Heart right ventricle (tissue), 16 donors: ENCODE measurements at regions of chr5 and their contacts with region 1.

Region 1: DNA sequence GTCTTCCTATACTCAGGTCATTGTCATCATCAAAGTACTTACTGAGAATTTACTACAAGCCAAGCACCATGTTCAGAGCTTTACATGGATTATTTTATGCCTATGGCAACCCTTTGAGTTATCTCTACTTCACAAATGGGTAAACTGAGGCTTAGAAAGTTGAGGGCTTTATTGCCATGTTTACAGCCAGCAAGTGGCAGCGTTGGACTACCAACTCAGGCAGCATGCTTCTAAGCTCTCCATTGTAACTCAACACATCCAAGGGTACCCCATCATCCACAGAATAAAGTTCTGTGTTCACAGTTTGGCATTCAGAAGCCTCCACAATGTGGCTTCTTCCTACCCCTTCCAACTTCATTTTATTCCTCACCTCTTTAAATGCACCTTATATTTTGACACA is 422.6 kb upstream of the GRIA1 start:
- DNase-seq: no peak
- ATAC-seq: no peak
- H3K4me3 ChIP-seq: no peak overlapping the region
- H3K27ac ChIP-seq: no peak overlapping the region
- H3K4me1 ChIP-seq: no peaks in the 10 kb centered on the region
- H3K27me3 ChIP-seq: no peaks in the 10 kb centered on the region
- CTCF ChIP-seq: no peak

Region 2: DNA sequence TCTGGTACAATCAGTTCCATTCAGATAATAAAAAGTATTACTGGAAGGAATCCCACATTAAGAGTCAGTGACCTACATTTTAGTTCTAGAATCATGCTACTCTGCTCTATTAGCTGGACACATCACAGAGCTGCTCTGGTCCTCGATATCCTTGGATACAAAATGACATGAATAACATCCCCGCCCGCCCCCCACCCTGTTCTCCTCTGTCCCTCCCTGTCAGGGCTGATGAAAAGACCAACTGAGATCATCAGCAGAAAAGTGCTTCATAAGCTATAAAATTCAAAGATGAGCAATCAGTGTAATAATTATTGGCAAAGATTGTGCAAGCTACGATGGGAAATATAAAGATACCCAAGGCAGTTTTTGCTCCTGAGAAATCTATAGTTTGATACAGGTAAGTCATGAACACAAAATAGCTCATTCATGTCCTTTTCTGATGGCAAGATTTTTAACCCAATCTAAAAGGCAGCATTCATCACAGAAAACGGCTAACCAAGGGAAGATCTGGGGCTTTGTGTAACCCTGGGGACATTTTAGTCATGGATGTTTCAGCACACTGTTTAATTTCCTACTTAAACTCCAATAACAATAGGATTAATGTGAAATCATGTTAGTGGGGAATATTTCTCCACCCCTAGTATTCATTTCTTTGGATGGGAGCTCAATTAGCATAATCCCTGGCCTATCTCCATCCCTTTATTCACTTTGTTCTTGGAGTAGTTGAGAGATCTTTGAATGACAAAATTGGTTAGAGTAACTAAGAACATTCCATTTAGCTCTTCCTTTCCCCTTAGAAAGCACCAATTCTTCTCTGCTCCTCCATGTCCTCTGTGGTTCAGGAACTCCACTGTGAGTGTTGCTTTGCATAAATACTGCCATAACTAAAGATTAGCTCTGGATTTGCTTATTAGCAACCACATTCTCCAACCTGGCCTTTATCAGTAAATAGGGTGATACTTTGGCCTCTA is 36.8 kb before region 1 on chr5:
- intact Hi-C with region 1: loop called in 1 of 10 experiments (anchors 2 kb)
- DNase-seq: no peak
- ATAC-seq: no peak
- H3K4me3 ChIP-seq: no peak overlapping the region
- H3K27ac ChIP-seq: no peak overlapping the region
- H3K4me1 ChIP-seq: no peaks in the 10 kb centered on the region
- H3K27me3 ChIP-seq: no peaks in the 10 kb centered on the region
- CTCF ChIP-seq: no peak